Activated T-helper 1 cell treated with anti-CD3 and anti-CD28 coated beads, Interleukin-12 subunit alpha, Interleukin-12 subunit beta, Interleukin-2, Interleukin-4 antibody, amounts not matched to agents 30 ng/mL and 10 ng/mL and 1 ng/mL, durations not matched to agents 14 hours and 24 hours and 36 hours (primary cell): ENCODE measurements at regions of chr12 and their contacts with region 1.

Region 1: GRCh38 chr12:104462931-104463339 is 6.2 kb downstream of the CHST11 start:
- DNase-seq: peak; percentile 46
- H3K4me3 Mint-ChIP-seq: peak overlapping the region; percentile 83
- H3K27ac Mint-ChIP-seq: peak overlapping the region; percentile 96
- H3K4me1 Mint-ChIP-seq: peaks cover 85% of the 10 kb centered on the region
- H3K27me3 Mint-ChIP-seq: no peaks in the 10 kb centered on the region

Region 2: DNA sequence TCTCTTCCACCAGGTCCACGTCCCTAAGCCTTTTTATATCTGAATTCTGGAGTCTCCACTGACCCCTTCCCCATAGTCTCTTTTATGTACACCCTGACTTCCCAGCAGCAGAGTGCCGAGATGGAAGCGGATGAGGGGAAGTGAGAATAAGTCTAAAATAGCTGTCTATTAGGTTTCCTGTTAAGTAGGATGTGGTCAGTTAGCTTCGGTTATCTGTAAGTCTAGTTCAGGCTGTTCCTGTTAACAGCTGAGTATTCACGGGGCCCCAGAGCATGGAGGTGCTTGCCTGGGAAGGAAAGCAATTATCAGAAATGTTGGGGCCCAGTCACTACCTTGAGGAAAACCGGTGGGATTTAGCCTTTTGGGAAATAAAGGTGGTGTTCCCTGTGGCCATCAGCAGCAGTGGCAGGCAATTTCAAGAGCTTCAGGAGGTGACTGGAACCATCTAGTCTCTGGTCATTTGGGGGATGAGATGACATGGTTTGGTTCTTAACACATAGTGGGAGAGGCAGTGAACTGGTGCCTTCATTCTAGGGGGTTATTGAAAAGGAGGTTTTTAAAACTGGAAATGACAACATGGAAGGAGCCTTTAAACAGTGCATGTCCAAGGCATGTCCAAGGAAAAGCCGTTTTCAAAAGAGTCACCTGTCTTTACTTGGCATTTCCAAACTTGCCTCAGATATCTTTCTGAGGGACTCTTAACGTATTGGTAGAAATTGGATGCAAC is 15.6 kb after region 1 on chr12:
- intact Hi-C with region 1: loop called (anchors 1 kb)
- DNase-seq: no peak
- H3K4me3 Mint-ChIP-seq: peak overlapping the region; percentile 89
- H3K27ac Mint-ChIP-seq: peak overlapping the region; percentile 98
- H3K4me1 Mint-ChIP-seq: peaks cover 90% of the 10 kb centered on the region
- H3K27me3 Mint-ChIP-seq: no peaks in the 10 kb centered on the region